ENCODE measurements at regions of chr1 and their contacts with region 1.

Region 1: GRCh38 chr1:27087371-27088220 is 67.3 kb downstream of the SLC9A1 start:
- DNase-seq: no peak
- ATAC-seq: no peak
- H3K4me3 ChIP-seq: no peak overlapping the region
- H3K27ac ChIP-seq: no peak overlapping the region
- H3K4me1 ChIP-seq: no peaks in the 10 kb centered on the region
- H3K27me3 ChIP-seq: no peaks in the 10 kb centered on the region
- CTCF ChIP-seq: no peak

Region 2: DNA sequence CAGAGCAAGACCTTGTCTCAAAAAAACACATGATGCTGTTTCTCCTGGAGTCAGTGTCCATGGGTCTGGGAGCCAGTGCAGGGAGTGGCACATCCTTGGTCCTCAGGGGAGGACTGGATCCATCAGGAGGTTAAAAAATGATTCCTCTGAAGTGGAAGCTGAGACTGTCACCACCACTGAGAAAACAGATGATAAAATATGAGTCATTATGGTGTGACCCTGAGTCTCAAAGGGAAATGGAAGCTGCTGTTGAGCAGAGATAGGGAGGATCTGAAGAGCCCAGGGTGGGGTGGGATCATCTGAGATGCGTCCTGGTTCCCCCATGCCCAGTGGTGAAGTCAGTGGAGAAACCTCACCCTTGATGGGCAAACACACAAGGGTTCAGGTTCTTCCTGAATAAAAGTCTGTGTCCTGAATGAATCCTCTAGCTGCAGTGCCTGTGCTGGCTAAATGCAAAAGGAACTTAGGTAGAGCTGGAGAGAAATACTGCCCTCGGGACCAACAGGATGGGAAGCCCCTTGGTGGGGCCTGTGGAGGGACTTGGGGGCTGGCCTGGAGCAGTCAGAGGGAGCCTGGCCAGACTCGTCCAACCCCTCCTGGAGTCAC is 13.3 kb before region 1 on chr1:
- CTCF ChIA-PET with region 1: no interaction called
- POLR2A ChIA-PET with region 1: interaction called, 11 read pairs
- intact Hi-C with region 1: no loop called
- DNase-seq: peak; percentile 53
- ATAC-seq: peak; percentile 83
- H3K4me3 ChIP-seq: no peak overlapping the region
- H3K27ac ChIP-seq: no peak overlapping the region
- H3K4me1 ChIP-seq: peaks cover 8% of the 10 kb centered on the region
- H3K27me3 ChIP-seq: no peaks in the 10 kb centered on the region
- CTCF ChIP-seq: no peak

Measured in PC-3 (cell line).